Transverse colon (tissue), 4 donors: ENCODE measurements at regions of chr1 and their contacts with region 1.

Region 1: GRCh38 chr1:966611-967300 is 474 bp downstream of the PLEKHN1 start:
- DNase-seq: peak; percentile 85
- H3K4me3 ChIP-seq: peak overlapping the region; percentile 17 to 69 (median 52)
- H3K27ac ChIP-seq: peak overlapping the region; percentile 72 to 78 (median 75)
- H3K4me1 ChIP-seq: peaks cover 12 to 16% (median 15%) of the 10 kb centered on the region in 4 donors
- H3K27me3 ChIP-seq: peaks cover 35% of the 10 kb centered on the region
- CTCF ChIP-seq: no peak
- EP300 ChIP-seq: no peak
- POLR2A ChIP-seq: no peak

Region 2: DNA sequence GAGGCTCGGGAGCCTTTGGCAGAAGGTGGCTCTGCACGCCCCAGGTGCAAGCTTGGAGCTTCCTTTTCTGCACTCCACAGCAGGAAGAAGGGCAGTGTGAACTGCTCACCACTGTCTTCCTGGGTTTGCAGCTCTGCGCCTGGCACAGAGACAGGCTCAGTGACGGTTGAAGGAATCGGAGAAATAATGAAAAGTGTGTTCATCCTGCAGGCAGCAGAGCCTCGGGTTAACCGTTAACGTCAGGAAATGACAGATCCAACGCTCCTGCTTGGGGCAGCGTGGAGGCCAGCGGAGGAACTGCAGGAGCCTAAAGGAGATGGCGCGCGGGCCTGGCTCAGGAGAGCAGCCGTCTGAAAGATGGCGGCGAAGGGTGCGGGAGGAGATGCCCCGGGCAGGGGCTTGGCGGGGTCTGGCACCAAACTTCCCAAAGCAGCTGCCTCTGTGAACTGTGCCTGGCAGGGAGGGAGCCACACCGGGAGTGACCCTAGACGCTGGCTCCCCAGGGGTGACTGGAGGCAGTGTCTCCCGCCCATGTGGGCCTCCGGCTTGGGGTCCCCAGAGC is 53.9 kb before region 1 on chr1:
- in situ Hi-C with region 1: no loop called
- intact Hi-C with region 1: loop called (anchors 5 kb)
- DNase-seq: peak; percentile 9
- H3K4me3 ChIP-seq: no peak overlapping the region
- H3K27ac ChIP-seq: no peak overlapping the region
- H3K4me1 ChIP-seq: peaks cover 0 to 29% (median 12%) of the 10 kb centered on the region in 4 donors
- H3K27me3 ChIP-seq: peaks cover 85% of the 10 kb centered on the region
- CTCF ChIP-seq: peak; percentile 20 to 52 (median 42)
- EP300 ChIP-seq: no peak
- POLR2A ChIP-seq: no peak